ENCODE measurements at regions of chrX and their contacts with region 1.

Region 1: GRCh38 chrX:110002300-110003166 is at the start of gene TMEM164:
- DNase-seq: peak; percentile 12
- ATAC-seq: peak; percentile 83
- H3K4me3 ChIP-seq: peak within 1 kb of the TSS; percentile 40 to 71 (median 68); a peak in 5 of 6 replicates
- H3K27ac ChIP-seq: no peak within 1 kb of the TSS
- H3K4me1 ChIP-seq: peaks cover 32% of the 10 kb centered on the region
- H3K27me3 ChIP-seq: no peaks in the 10 kb centered on the region
- CTCF ChIP-seq: no peak
- EP300 ChIP-seq: no peak
- POLR2A ChIP-seq: 0 out of 4 replicates have a peak, but pooled peaks of 1 of the 2 experiments have one; percentile 27
- RAD21 ChIP-seq: no peak
- total RNA-seq, gene TMEM164: 9.8 and 13.2 TPM in 2 replicates

Region 2: GRCh38 chrX:110036162-110037033 is 33.9 kb after region 1 on chrX:
- CTCF ChIA-PET with region 1: no interaction called
- POLR2A ChIA-PET with region 1: no interaction called
- in situ Hi-C with region 1: no loop called
- intact Hi-C with region 1: loop called (anchors 2 kb)
- DNase-seq: peak; percentile 71
- ATAC-seq: peak; percentile 92
- H3K4me3 ChIP-seq: no peak overlapping the region
- H3K27ac ChIP-seq: no peak overlapping the region
- H3K4me1 ChIP-seq: peaks cover 33% of the 10 kb centered on the region
- H3K27me3 ChIP-seq: no peaks in the 10 kb centered on the region
- CTCF ChIP-seq: no peak
- EP300 ChIP-seq: peak in 1 of 2 experiments; percentile 69; a peak in 2 of 4 replicates
- POLR2A ChIP-seq: no peak
- RAD21 ChIP-seq: no peak

Region 3: DNA sequence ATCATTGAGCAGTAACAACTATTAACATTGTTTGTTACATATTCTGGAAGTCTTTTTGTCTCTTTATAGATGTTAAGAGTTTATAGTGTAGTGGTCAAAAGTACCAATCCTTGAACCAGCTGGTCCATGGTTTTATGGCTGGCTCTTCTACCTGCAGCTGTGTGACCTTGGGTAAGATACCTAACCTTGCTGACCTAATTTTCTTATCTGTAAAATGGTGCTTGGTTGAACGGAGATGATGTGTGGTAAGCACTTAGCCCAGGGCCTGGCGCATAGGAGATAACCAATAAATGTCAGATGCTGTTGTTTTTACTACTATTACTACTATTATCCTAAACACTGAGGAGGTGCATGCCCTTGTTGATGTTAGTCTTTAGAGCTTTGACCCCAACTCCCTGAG is 116.9 kb after region 1 on chrX:
- CTCF ChIA-PET with region 1: no interaction called
- POLR2A ChIA-PET with region 1: no interaction called
- in situ Hi-C with region 1: no loop called
- intact Hi-C with region 1: loop called (anchors 2 kb)
- DNase-seq: no peak
- ATAC-seq: no peak
- H3K4me3 ChIP-seq: no peak overlapping the region
- H3K27ac ChIP-seq: no peak overlapping the region
- H3K4me1 ChIP-seq: peaks cover 53% of the 10 kb centered on the region
- H3K27me3 ChIP-seq: no peaks in the 10 kb centered on the region
- CTCF ChIP-seq: no peak
- EP300 ChIP-seq: no peak
- POLR2A ChIP-seq: no peak
- RAD21 ChIP-seq: no peak